ENCODE measurements at regions of chr4 and their contacts with region 1.

Region 1: DNA sequence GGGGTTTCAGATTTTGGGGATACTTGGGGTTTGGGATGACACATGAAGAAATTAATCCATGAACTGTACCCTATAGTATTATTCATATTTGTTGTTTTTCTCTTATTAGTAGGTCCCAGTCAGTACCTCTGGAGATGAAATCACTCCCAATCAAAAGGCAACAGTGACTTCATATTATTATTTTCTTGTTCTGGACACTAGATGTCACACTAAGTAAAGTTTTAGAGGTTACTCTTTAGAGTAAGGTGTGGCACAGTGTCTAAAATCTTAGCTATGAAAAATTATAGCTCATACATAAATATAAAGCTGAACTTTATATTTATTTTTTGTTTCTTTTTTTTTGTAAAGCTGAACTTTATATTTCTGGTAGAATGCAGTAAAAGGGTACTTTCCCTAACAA is 35.1 kb downstream of the FAM114A1 start:
- DNase-seq: no peak
- H3K4me3 ChIP-seq: no peak overlapping the region
- H3K27ac ChIP-seq: peak overlapping the region in 2 of 4 donors; percentile 32 to 54
- H3K4me1 ChIP-seq: peaks cover 0 to 40% (median 17%) of the 10 kb centered on the region in 4 donors
- H3K27me3 ChIP-seq: no peaks in the 10 kb centered on the region
- CTCF ChIP-seq: peak in 3 of 4 experiments; percentile 16 to 44 (median 25)
- EP300 ChIP-seq: no peak
- POLR2A ChIP-seq: no peak

Region 2: GRCh38 chr4:38818441-38818976 is 84.2 kb before region 1 on chr4:
- intact Hi-C with region 1: no loop called
- DNase-seq: no peak
- H3K4me3 ChIP-seq: no peak overlapping the region
- H3K27ac ChIP-seq: no peak overlapping the region
- H3K4me1 ChIP-seq: no peaks in the 10 kb centered on the region
- H3K27me3 ChIP-seq: no peaks in the 10 kb centered on the region
- CTCF ChIP-seq: no peak
- EP300 ChIP-seq: no peak
- POLR2A ChIP-seq: no peak

Region 3: DNA sequence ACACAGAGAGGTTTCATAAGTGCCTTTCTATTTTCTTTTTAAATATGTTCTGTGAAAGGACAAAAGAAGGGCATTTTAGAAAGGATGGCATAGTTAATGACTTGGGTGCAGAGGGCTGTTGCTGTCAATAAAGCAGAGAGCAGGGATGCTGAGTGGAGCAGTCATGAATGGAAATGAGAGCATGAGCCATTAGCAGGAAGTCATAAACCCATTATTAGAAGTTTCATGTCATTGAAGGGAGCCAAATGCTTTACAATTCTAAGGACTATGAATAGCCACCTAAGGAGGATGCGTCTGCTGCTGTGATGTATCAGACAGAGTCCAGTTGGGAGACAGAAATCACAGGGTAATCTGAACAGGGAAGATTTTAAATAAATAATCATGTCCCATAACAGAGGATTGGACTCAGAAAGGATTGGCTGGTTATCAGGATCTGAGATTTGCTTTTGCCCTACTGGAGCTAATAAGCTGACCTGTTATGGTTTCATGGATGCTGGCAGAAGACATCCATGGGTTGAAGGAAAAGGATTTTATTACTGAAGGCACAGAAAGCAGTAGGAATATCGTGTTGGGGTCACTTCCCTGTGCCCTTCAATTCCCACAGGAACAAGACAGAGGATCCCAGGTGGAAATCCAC is 232.1 kb after region 1 on chr4:
- intact Hi-C with region 1: loop called (anchors 1 kb)
- DNase-seq: no peak
- H3K4me3 ChIP-seq: peak overlapping the region in 1 of 4 donors; percentile 12
- H3K27ac ChIP-seq: peak overlapping the region in 3 of 4 donors; percentile 23 to 68 (median 66)
- H3K4me1 ChIP-seq: peaks cover 0 to 18% (median 10%) of the 10 kb centered on the region in 4 donors
- H3K27me3 ChIP-seq: no peaks in the 10 kb centered on the region
- CTCF ChIP-seq: no peak
- EP300 ChIP-seq: no peak
- POLR2A ChIP-seq: no peak

Region 4: GRCh38 chr4:39181905-39182638 is 279.4 kb after region 1 on chr4 and contains the start of gene WDR19:
- intact Hi-C with region 1: loop called (anchors 5 kb)
- DNase-seq: peak; percentile 99
- H3K4me3 ChIP-seq: peak within 1 kb of the TSS; percentile 64 to 83 (median 76)
- H3K27ac ChIP-seq: peak within 1 kb of the TSS; percentile 71 to 80 (median 79)
- H3K4me1 ChIP-seq: peaks cover 0 to 21% (median 14%) of the 10 kb centered on the region in 4 donors
- H3K27me3 ChIP-seq: no peaks in the 10 kb centered on the region
- CTCF ChIP-seq: peak; percentile 41 to 54 (median 46)
- EP300 ChIP-seq: peak in 1 of 4 donors; percentile 47
- POLR2A ChIP-seq: no peak
- total RNA-seq, gene WDR19: 49.9 to 62.0 (median 52.2) TPM